CD8-positive, alpha-beta memory T cell (primary cell): ENCODE measurements at regions of chr16 and their contacts with region 1.

Region 1: DNA sequence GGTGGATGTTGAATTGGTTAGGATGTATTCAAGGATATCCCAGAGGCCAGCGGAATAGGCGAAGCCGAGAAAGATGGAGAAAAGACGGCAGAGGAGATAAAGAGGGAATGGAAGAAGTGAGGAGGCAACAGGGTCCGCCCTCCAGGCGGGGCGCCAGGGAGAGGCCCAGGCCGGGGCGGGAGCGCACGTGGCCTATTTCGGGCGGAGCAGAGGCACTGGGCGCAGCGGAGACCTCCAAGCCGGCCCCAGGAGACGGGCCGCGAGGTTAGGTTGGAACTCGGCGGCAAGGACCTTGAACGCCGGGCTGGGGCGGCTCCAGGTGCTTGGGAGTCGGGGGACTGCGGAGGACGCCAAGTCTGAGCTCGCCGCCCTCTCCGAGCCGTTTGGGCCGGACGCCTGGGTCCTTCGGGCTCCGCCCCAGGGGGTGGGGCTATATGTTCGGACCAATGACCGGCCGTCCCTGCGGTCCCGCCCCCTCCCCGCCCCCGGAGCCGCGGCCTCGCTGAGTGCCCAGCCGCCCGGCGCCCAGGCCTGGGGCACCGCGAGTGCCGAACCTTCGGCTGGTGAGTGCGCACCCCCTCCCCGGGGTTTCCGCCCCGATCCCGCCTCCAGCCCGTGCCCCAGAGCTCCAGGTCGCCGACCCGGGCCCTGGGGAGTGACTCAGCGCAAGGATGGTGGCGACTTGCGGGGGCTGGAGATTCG is at the start of gene ZNF771:
- DNase-seq: peak; percentile 79 to 90 (median 90)
- H3K4me3 ChIP-seq: peak within 1 kb of the TSS; percentile 87
- H3K4me3 Mint-ChIP-seq: peak within 1 kb of the TSS; percentile 88 to 99 (median 91)
- H3K27ac ChIP-seq: peak within 1 kb of the TSS; percentile 54
- H3K27ac Mint-ChIP-seq: peak within 1 kb of the TSS; percentile 81 to 98 (median 94)
- H3K4me1 ChIP-seq: peaks cover 12% of the 10 kb centered on the region
- H3K4me1 Mint-ChIP-seq: peaks cover 22 to 34% (median 23%) of the 10 kb centered on the region in 3 donors
- H3K27me3 ChIP-seq: no peaks in the 10 kb centered on the region
- H3K27me3 Mint-ChIP-seq: no peaks in the 10 kb centered on the region
- total RNA-seq, gene ZNF771: 7.3 to 9.8 TPM

Region 2: DNA sequence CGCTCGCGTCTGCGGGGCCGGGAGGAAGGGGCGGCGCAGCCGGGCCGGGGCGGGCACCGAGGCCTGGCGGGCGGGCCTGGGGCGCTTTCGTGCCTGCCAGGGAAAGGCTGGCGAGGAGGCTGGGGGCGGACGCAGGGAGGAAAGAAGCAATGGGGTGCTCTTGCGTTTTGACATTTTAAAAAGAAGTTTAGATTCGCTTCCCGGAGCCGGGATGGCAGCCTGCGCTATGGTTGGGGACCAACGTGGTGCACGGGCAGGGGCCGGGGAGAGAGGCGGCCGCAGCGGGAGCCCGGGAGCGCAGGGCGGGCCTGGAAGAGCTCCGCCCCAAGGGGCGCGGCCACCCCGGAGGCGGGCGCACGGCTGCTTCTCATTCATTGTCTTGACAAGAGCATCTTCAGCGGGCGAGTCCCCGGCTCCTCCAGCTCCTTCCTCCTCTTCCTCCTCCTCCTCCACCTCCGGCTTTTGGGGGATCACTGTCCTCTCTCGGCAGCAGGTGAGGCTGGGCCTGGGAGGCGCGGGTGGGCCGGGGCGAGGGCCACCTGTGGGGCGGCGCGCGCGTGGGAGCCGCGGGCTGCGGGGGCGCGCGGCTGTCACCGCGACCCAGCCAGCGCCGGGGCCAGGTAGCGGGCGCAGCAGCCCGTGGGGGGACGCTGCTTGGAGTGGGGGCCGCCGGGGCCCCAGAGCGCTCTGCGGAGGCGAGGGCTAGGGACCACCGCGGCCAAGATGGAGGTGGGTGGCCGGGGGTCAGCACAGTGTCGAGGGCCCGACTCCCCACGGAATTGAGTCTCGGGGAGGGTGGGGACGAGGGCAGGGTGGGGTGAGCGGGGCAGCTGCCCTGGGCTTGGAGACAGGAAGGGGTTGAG is 223.8 kb before region 1 on chr16 and contains the start of gene CORO1A:
- CTCF ChIA-PET with region 1: interaction called, 11 read pairs
- POLR2A ChIA-PET with region 1: no interaction called
- DNase-seq: peak; percentile 75 to 88 (median 80)
- H3K4me3 ChIP-seq: peak within 1 kb of the TSS; percentile 99
- H3K4me3 Mint-ChIP-seq: peak within 1 kb of the TSS; percentile 94 to 100 (median 98)
- H3K27ac ChIP-seq: peak within 1 kb of the TSS; percentile 71
- H3K27ac Mint-ChIP-seq: peak within 1 kb of the TSS; percentile 92 to 100 (median 96)
- H3K4me1 ChIP-seq: peaks cover 33% of the 10 kb centered on the region
- H3K4me1 Mint-ChIP-seq: peaks cover 25 to 43% (median 34%) of the 10 kb centered on the region in 3 donors
- H3K27me3 ChIP-seq: no peaks in the 10 kb centered on the region
- H3K27me3 Mint-ChIP-seq: peaks cover 0 to 14% of the 10 kb centered on the region in 2 donors
- total RNA-seq, gene CORO1A: 889 to 952 TPM

Region 3: DNA sequence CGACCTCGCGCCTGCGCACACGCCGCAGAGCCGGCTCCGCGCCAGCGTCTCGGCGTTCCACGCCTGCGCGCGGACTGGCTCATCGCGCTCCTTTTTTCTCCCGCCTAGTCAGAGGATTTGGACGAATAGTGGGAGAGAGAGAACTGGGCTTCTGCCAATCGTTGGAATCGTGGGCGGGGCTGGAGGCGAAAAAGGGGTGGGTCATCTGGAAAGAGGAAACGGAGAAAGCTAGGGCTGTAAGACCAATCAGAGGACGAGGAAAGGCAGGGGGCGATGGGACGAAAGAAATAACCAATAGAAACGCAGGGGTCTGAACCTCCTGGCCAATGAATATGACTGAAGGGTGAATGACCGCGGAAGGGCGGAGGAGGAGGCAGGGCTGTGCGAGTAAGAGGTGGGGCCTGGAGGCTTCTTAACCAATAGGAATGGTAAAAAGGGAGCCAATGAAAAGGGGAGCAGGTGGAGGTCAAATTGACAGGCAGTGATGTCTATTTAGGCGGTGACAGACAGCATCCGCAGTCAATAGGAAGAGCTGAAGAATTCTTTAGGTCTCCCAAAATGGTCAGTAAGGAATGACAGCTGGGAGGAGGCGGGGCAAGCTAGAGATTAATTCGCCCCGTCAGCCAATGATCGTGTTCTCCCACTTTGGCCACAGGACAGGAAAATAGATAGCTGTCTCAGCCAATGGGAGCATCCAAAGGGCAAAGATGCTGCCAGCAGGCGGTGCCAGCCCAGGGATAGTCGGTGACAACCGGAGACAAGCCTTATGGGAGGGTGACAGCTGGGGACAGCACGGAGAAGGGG is 36.6 kb before region 1 on chr16 and contains the start of gene TBC1D10B:
- CTCF ChIA-PET with region 1: interaction called, 20 read pairs
- POLR2A ChIA-PET with region 1: interaction called, 6 read pairs
- DNase-seq: peak; percentile 96 to 100 (median 100)
- H3K4me3 ChIP-seq: peak within 1 kb of the TSS; percentile 88
- H3K4me3 Mint-ChIP-seq: peak within 1 kb of the TSS; percentile 83 to 91 (median 89)
- H3K27ac ChIP-seq: peak within 1 kb of the TSS; percentile 74
- H3K27ac Mint-ChIP-seq: peak within 1 kb of the TSS; percentile 67 to 97 (median 94)
- H3K4me1 ChIP-seq: peaks cover 36% of the 10 kb centered on the region
- H3K4me1 Mint-ChIP-seq: peaks cover 43 to 56% (median 47%) of the 10 kb centered on the region in 3 donors
- H3K27me3 ChIP-seq: no peaks in the 10 kb centered on the region
- H3K27me3 Mint-ChIP-seq: peaks cover 0 to 2% of the 10 kb centered on the region in 2 donors
- total RNA-seq, gene TBC1D10B: 59.0 to 61.4 TPM

Region 4: DNA sequence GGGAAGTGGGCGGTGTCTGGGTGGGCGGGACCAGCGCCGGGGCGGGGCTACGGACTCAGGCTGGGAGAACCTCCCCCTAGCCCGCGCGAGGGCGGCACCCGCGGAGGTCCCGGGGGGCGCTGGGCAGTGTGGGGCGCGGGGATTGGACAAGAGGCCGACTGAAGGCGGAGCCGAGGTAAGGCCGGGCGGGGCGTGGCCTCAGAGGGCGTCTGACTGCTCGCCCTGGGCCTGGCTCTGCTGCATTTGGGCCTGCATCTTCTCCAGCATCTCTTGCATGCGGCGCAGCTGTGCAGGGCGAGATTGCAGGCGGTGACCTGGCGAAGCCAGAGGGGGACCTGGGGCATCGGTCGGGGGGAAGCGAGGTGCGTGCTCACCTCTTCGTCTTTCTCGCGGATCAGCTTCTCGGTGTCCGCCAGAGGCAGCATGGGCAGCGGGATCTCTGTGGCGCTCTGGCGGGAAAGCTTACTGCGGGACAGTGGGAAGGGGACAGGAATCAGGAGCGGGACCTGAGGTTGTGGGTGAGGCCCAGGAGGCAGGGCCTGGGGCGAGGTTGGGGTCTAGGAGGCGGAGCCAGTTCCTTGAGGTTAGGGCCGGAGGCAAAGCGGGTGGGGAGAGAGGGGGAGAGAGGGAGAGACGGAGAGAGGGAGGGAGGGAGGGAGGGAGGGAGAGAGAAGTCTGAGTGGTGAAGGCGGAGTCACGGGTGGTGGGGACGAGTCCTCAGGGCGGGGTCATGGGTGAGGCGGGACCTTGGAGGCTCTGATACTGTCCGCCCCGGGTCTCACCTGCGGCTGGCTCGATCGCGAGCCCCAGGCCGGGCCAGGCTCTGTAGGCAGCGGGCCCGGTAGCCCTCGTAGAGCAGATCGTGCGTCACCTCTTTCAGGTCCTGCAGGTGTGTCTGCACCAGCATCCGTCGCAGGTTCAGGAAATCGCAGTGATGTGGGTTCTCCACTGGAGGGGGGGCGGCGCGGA is 28.7 kb before region 1 on chr16:
- CTCF ChIA-PET with region 1: interaction called, 20 read pairs
- POLR2A ChIA-PET with region 1: interaction called, 12 read pairs
- DNase-seq: peak; percentile 99 to 100 (median 99)
- H3K4me3 ChIP-seq: peak overlapping the region; percentile 99
- H3K4me3 Mint-ChIP-seq: peak overlapping the region; percentile 92 to 100 (median 96)
- H3K27ac ChIP-seq: peak overlapping the region; percentile 99
- H3K27ac Mint-ChIP-seq: peak overlapping the region; percentile 99 to 100 (median 100)
- H3K4me1 ChIP-seq: peaks cover 64% of the 10 kb centered on the region
- H3K4me1 Mint-ChIP-seq: peaks cover 55 to 63% (median 55%) of the 10 kb centered on the region in 3 donors
- H3K27me3 ChIP-seq: no peaks in the 10 kb centered on the region
- H3K27me3 Mint-ChIP-seq: peaks cover 0 to 2% of the 10 kb centered on the region in 2 donors

Region 5: GRCh38 chr16:30395155-30395991 is 11.9 kb before region 1 on chr16 and contains the start of gene ZNF48:
- CTCF ChIA-PET with region 1: interaction called, 19 read pairs
- POLR2A ChIA-PET with region 1: interaction called, 16 read pairs
- DNase-seq: peak; percentile 37 to 64 (median 58)
- H3K4me3 ChIP-seq: peak within 1 kb of the TSS; percentile 60
- H3K4me3 Mint-ChIP-seq: peak within 1 kb of the TSS; percentile 72 to 93 (median 89)
- H3K27ac ChIP-seq: peak within 1 kb of the TSS; percentile 52
- H3K27ac Mint-ChIP-seq: peak within 1 kb of the TSS; percentile 44 to 98 (median 86)
- H3K4me1 ChIP-seq: peaks cover 25% of the 10 kb centered on the region
- H3K4me1 Mint-ChIP-seq: peaks cover 30 to 48% (median 33%) of the 10 kb centered on the region in 3 donors
- H3K27me3 ChIP-seq: no peaks in the 10 kb centered on the region
- H3K27me3 Mint-ChIP-seq: no peaks in the 10 kb centered on the region
- total RNA-seq, gene ZNF48: 18.4 to 19.3 TPM

Region 6: GRCh38 chr16:30417529-30418349 is 10.5 kb after region 1 on chr16:
- CTCF ChIA-PET with region 1: interaction called, 28 read pairs
- POLR2A ChIA-PET with region 1: interaction called, 20 read pairs
- DNase-seq: peak; percentile 80 to 93 (median 89)
- H3K4me3 ChIP-seq: peak overlapping the region; percentile 68
- H3K4me3 Mint-ChIP-seq: peak overlapping the region; percentile 58 to 86 (median 71)
- H3K27ac ChIP-seq: peak overlapping the region; percentile 65
- H3K27ac Mint-ChIP-seq: peak overlapping the region in 4 of 8 donors; percentile 68 to 88 (median 75)
- H3K4me1 ChIP-seq: peaks cover 11% of the 10 kb centered on the region
- H3K4me1 Mint-ChIP-seq: peaks cover 14 to 16% (median 14%) of the 10 kb centered on the region in 3 donors
- H3K27me3 ChIP-seq: no peaks in the 10 kb centered on the region
- H3K27me3 Mint-ChIP-seq: peaks cover 0 to 1% of the 10 kb centered on the region in 2 donors

Region 7: GRCh38 chr16:30482366-30482765 is 75.1 kb after region 1 on chr16:
- CTCF ChIA-PET with region 1: no interaction called
- POLR2A ChIA-PET with region 1: no interaction called
- DNase-seq: no peak
- H3K4me3 ChIP-seq: no peak overlapping the region
- H3K4me3 Mint-ChIP-seq: peak overlapping the region in 5 of 7 donors; percentile 2 to 57 (median 26)
- H3K27ac ChIP-seq: no peak overlapping the region
- H3K27ac Mint-ChIP-seq: peak overlapping the region; percentile 34 to 90 (median 77)
- H3K4me1 ChIP-seq: peaks cover 38% of the 10 kb centered on the region
- H3K4me1 Mint-ChIP-seq: peaks cover 42 to 69% (median 57%) of the 10 kb centered on the region in 3 donors
- H3K27me3 ChIP-seq: no peaks in the 10 kb centered on the region
- H3K27me3 Mint-ChIP-seq: no peaks in the 10 kb centered on the region